Heart right ventricle (tissue), 16 donors: ENCODE measurements at regions of chr3 and their contacts with region 1.

Region 1: DNA sequence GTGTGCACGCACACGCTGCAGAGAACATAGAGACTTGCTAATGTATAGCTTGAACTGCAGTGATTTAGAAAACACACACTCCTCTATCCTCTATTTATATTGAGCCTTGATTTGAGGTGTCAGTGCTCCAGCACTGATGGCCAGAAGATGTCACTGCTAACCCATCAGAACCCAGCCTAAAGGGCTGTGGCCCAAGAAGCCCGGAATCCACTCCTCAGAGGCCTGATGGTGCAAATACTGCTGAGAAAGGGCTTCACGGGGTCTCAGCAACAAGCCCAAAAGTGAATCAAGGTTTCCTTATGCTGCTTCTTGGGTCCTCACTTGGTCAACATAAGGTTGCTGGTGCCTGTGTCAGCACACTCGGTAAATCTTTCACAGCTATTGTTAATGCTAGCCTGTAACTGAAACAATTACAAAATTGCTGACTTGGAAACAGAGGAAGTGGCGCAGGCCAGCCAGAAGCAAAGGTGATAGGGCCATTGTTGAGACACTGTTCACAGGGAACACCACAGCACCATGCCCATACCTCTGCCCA is 60.3 kb downstream of the HEG1 start:
- DNase-seq: peak; percentile 39 to 52
- ATAC-seq: peak; percentile 54 to 80 (median 72)
- H3K4me3 ChIP-seq: no peak overlapping the region
- H3K27ac ChIP-seq: peak overlapping the region in 9 of 10 donors; percentile 5 to 84 (median 54)
- H3K4me1 ChIP-seq: peaks cover 21 to 81% (median 57%) of the 10 kb centered on the region in 9 donors
- H3K27me3 ChIP-seq: no peaks in the 10 kb centered on the region
- CTCF ChIP-seq: peak; percentile 50 to 83 (median 72)

Region 2: GRCh38 chr3:124761250-124761796 is 234.2 kb before region 1 on chr3:
- intact Hi-C with region 1: loop called in 1 of 10 experiments (anchors 10 kb)
- DNase-seq: peak; percentile 88 to 89
- ATAC-seq: peak; percentile 87 to 94 (median 89)
- H3K4me3 ChIP-seq: no peak overlapping the region
- H3K27ac ChIP-seq: peak overlapping the region in 6 of 10 donors; percentile 4 to 64 (median 52)
- H3K4me1 ChIP-seq: peaks cover 0 to 22% (median 13%) of the 10 kb centered on the region in 9 donors
- H3K27me3 ChIP-seq: no peaks in the 10 kb centered on the region
- CTCF ChIP-seq: peak; percentile 96 to 99 (median 97)

Region 3: DNA sequence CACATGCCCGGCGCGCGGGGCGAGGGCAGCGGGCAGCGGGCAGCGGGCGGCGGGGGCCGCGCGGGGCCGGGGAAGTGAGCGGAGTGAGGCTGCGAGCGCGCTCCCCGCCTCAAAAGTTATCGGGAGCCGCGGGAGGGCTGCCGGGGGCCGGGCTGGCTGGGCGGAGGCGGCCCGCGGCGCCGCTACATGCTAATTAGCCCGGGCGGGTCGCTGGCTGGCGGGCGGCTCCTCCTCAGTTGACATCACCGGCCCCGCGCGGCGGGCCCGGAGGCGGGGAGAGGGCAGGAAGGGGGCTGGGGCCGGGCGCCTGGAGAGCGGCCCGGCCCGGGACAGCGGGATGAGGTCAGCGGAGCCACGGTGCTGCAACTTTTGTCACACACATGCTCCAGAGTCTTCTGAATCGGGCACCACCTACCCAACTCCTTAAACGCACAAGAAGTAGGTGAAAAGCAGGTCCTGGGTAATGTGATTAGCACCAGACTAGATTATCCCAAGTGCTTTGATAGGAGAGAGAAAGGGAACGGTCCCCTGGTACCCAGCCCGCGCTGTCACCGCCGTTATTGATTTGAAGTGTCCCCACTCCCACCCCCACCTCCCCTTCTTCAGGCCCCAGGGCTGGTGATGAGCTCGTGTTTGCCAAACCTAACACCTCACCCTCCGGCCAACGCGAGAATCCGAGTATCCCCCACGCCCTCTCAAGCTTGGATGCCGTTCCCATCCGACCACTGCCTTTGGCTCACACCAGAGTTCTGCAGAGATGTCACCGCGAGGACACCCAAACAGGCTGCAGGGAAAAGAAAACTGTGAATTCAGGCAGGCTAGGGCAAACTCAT is 60.6 kb after region 1 on chr3 and contains the start of gene HEG1:
- intact Hi-C with region 1: loop called in 7 of 10 experiments (anchors 5 to 10 kb)
- DNase-seq: peak; percentile 93 to 94
- ATAC-seq: peak; percentile 89 to 94 (median 92)
- H3K4me3 ChIP-seq: peak within 1 kb of the TSS; percentile 79 to 96 (median 85)
- H3K27ac ChIP-seq: peak within 1 kb of the TSS; percentile 92 to 99 (median 96)
- H3K4me1 ChIP-seq: peaks cover 20 to 76% (median 63%) of the 10 kb centered on the region in 9 donors
- H3K27me3 ChIP-seq: no peaks in the 10 kb centered on the region
- CTCF ChIP-seq: no peak
- total RNA-seq, gene HEG1: 79.0 to 186 (median 143) TPM

Region 4: GRCh38 chr3:125141596-125142419 is 146.3 kb after region 1 on chr3:
- intact Hi-C with region 1: loop called in 3 of 10 experiments (anchors 5 kb)
- DNase-seq: peak; percentile 78 to 82
- ATAC-seq: peak; percentile 76 to 92 (median 87)
- H3K4me3 ChIP-seq: peak overlapping the region in 9 of 10 donors; percentile 21 to 51 (median 47)
- H3K27ac ChIP-seq: peak overlapping the region; percentile 59 to 94 (median 84)
- H3K4me1 ChIP-seq: peaks cover 26 to 80% (median 59%) of the 10 kb centered on the region in 9 donors
- H3K27me3 ChIP-seq: no peaks in the 10 kb centered on the region
- CTCF ChIP-seq: peak in 8 of 9 donors; percentile 23 to 74 (median 58)

Region 5: GRCh38 chr3:125165189-125165947 is 169.8 kb after region 1 on chr3:
- intact Hi-C with region 1: loop called (anchors 1 to 5 kb)
- DNase-seq: peak in 1 of 2 donors; percentile 50
- ATAC-seq: peak; percentile 76 to 89 (median 85)
- H3K4me3 ChIP-seq: no peak overlapping the region
- H3K27ac ChIP-seq: no peak overlapping the region
- H3K4me1 ChIP-seq: peaks cover 0 to 44% (median 24%) of the 10 kb centered on the region in 9 donors
- H3K27me3 ChIP-seq: no peaks in the 10 kb centered on the region
- CTCF ChIP-seq: peak; percentile 69 to 85 (median 81)

Region 6: DNA sequence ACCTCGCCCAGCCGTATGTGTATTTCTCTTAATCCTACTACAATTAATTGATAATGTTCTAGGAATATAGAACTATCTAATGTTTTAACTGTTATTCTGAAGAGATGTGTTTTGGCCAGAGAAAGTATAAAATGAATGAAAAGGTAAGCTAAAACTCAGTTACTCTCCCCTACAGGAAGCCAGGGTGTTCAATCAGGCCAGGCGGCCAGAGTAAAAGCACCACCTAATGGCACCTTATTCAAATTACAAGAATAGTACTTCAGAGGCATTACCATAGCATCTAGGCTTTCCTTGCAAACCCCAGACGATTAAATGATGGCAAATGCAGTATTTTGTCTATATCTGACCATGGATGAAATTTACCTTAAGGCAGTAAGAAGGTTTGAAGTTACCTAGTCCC is 206.7 kb after region 1 on chr3:
- intact Hi-C with region 1: no loop called
- DNase-seq: no peak
- ATAC-seq: no peak
- H3K4me3 ChIP-seq: no peak overlapping the region
- H3K27ac ChIP-seq: no peak overlapping the region
- H3K4me1 ChIP-seq: no peaks in the 10 kb centered on the region
- H3K27me3 ChIP-seq: no peaks in the 10 kb centered on the region
- CTCF ChIP-seq: peak in 1 of 9 donors; percentile 22

Region 7: GRCh38 chr3:125437631-125438435 is 442.3 kb after region 1 on chr3:
- intact Hi-C with region 1: loop called in 8 of 10 experiments (anchors 1 to 5 kb)
- DNase-seq: peak; percentile 29 to 44
- ATAC-seq: peak in 7 of 8 donors; percentile 34 to 69 (median 62)
- H3K4me3 ChIP-seq: no peak overlapping the region
- H3K27ac ChIP-seq: no peak overlapping the region
- H3K4me1 ChIP-seq: no peaks in the 10 kb centered on the region
- H3K27me3 ChIP-seq: no peaks in the 10 kb centered on the region
- CTCF ChIP-seq: peak in 8 of 9 donors; percentile 92 to 98 (median 96)